ENCODE measurements at regions of chr18 and their contacts with region 1.

Region 1: GRCh38 chr18:29892960-29893558 is 1149.5 kb downstream of the DSC3 start:
- DNase-seq: peak; percentile 17
- H3K4me3 ChIP-seq: no peak overlapping the region
- H3K27ac ChIP-seq: no peak overlapping the region
- H3K4me1 ChIP-seq: no peaks in the 10 kb centered on the region
- H3K27me3 ChIP-seq: no peaks in the 10 kb centered on the region
- CTCF ChIP-seq: peak; percentile 59

Region 2: GRCh38 chr18:29629493-29630042 is 263.5 kb before region 1 on chr18:
- CTCF ChIA-PET with region 1: no interaction called
- POLR2A ChIA-PET with region 1: no interaction called
- intact Hi-C with region 1: no loop called
- DNase-seq: no peak
- H3K4me3 ChIP-seq: no peak overlapping the region
- H3K27ac ChIP-seq: no peak overlapping the region
- H3K4me1 ChIP-seq: no peaks in the 10 kb centered on the region
- H3K27me3 ChIP-seq: no peaks in the 10 kb centered on the region
- CTCF ChIP-seq: no peak

Region 3: DNA sequence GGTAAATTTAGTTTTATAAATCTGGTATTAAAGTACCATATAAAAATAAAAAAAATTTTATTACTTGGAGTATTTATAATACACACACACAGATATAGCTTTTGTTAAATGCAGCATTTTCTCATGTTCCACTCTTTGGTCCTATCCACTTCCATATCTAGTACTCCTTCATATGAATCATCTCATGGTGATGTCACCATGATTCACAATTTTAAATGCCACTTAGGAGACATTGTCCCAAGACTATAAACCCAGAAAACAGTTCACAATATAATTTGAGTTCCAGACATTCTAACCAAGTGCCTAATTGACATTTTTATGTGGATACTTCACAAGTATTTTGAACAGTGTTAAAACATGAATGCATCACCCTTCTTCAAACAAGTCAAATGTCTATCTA is 248.8 kb before region 1 on chr18:
- CTCF ChIA-PET with region 1: no interaction called
- POLR2A ChIA-PET with region 1: no interaction called
- intact Hi-C with region 1: no loop called
- DNase-seq: peak; percentile 4
- H3K4me3 ChIP-seq: no peak overlapping the region
- H3K27ac ChIP-seq: no peak overlapping the region
- H3K4me1 ChIP-seq: no peaks in the 10 kb centered on the region
- H3K27me3 ChIP-seq: no peaks in the 10 kb centered on the region
- CTCF ChIP-seq: no peak

Region 4: GRCh38 chr18:30132958-30133357 is 239.9 kb after region 1 on chr18:
- CTCF ChIA-PET with region 1: no interaction called
- POLR2A ChIA-PET with region 1: no interaction called
- intact Hi-C with region 1: no loop called
- DNase-seq: no peak
- H3K4me3 ChIP-seq: no peak overlapping the region
- H3K27ac ChIP-seq: no peak overlapping the region
- H3K4me1 ChIP-seq: no peaks in the 10 kb centered on the region
- H3K27me3 ChIP-seq: no peaks in the 10 kb centered on the region
- CTCF ChIP-seq: no peak

Region 5: GRCh38 chr18:30280880-30281470 is 387.9 kb after region 1 on chr18:
- CTCF ChIA-PET with region 1: no interaction called
- POLR2A ChIA-PET with region 1: no interaction called
- intact Hi-C with region 1: loop called (anchors 5 kb)
- DNase-seq: peak; percentile 75
- H3K4me3 ChIP-seq: no peak overlapping the region
- H3K27ac ChIP-seq: no peak overlapping the region
- H3K4me1 ChIP-seq: no peaks in the 10 kb centered on the region
- H3K27me3 ChIP-seq: no peaks in the 10 kb centered on the region
- CTCF ChIP-seq: peak; percentile 74